ENCODE measurements at regions of chr6 and their contacts with region 1.

Region 1: GRCh38 chr6:30828027-30828960 is 56.0 kb upstream of the DDR1 start:
- DNase-seq: peak; percentile 62 to 88 (median 78)
- ATAC-seq: peak; percentile 81
- H3K4me3 ChIP-seq: peak overlapping the region; percentile 64 to 91
- H3K4me3 Mint-ChIP-seq: peak overlapping the region; percentile 96
- H3K27ac ChIP-seq: peak overlapping the region; percentile 67 to 86
- H3K27ac Mint-ChIP-seq: peak overlapping the region; percentile 97
- H3K4me1 ChIP-seq: peaks cover 46% of the 10 kb centered on the region
- H3K4me1 Mint-ChIP-seq: peaks cover 79% of the 10 kb centered on the region
- H3K27me3 ChIP-seq: no peaks in the 10 kb centered on the region
- H3K27me3 Mint-ChIP-seq: no peaks in the 10 kb centered on the region
- CTCF ChIP-seq: peak; percentile 81

Region 2: DNA sequence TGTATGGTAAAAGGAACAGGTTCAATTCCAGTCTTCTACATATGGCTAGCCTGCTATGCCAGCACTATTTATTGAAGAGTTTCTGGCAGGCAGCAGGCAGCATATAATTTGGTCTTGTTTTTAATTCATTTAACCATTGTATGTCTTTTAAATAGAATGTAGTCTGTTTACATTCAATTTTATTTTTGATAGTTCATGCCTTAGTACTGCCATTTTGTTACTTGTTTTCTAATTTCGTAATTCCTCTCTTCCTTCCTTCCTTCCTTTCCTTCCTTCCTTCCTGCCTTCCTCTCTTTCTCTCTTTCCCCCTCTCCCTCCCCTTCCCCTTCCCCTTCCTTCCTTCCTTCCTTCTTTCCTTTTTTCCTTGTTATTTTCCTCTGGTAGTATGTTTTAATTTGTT is 1675.2 kb before region 1 on chr6:
- CTCF ChIA-PET with region 1: no interaction called
- POLR2A ChIA-PET with region 1: no interaction called
- intact Hi-C with region 1: no loop called
- DNase-seq: no peak
- ATAC-seq: no peak
- H3K4me3 ChIP-seq: no peak overlapping the region
- H3K4me3 Mint-ChIP-seq: no peak overlapping the region
- H3K27ac ChIP-seq: no peak overlapping the region
- H3K27ac Mint-ChIP-seq: no peak overlapping the region
- H3K4me1 ChIP-seq: no peaks in the 10 kb centered on the region
- H3K4me1 Mint-ChIP-seq: no peaks in the 10 kb centered on the region
- H3K27me3 ChIP-seq: peaks cover 0 to 2% of the 10 kb centered on the region in 2 experiments
- H3K27me3 Mint-ChIP-seq: peaks cover 50% of the 10 kb centered on the region
- CTCF ChIP-seq: no peak

Region 3: DNA sequence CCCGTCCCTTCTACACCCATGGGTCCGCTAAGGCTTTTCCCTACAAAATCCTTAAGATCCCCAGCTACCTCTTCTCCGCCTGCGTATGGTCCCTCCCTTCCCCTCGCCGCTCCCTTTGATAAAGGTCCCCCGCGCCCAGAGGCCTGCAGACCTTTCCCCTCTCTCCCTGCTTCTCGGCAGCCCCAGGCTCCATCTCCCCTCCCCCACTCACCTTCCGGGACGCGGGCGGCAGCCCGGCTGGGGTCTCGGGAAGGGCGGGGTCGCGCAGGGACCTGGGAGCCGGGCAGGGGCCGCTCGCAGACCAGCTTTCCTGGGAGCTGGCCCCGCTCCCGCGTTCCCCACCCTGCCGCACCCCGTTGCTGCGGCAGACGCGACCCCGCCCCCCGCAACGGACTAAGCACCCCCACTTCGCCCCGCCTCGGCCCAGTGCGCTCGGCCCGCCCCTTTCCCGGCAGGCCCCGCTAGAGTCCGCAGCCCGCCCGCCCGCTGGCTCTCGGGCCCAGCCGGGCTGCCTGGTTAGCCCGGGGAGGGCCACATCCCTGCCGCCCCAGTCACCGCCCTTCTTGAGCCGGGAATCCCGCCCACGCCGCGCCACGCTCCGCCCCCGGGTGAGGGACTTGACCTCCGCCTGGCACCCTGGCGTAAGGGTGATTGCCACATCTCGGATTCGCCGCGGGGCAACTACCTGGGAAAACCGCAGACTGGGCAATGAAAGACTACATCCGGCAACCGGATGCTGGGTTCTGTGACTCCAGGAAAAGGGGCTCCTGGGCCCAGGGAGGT is 85.8 kb before region 1 on chr6 and contains the start of gene FLOT1:
- CTCF ChIA-PET with region 1: interaction called, 5 read pairs
- POLR2A ChIA-PET with region 1: no interaction called
- intact Hi-C with region 1: loop called in 1 of 2 experiments (anchors 2 kb)
- DNase-seq: peak; percentile 66 to 93 (median 80)
- ATAC-seq: peak; percentile 60
- H3K4me3 ChIP-seq: peak within 1 kb of the TSS; percentile 75 to 84
- H3K4me3 Mint-ChIP-seq: peak within 1 kb of the TSS; percentile 91
- H3K27ac ChIP-seq: peak within 1 kb of the TSS; percentile 49 to 68
- H3K27ac Mint-ChIP-seq: peak within 1 kb of the TSS; percentile 85
- H3K4me1 ChIP-seq: peaks cover 45% of the 10 kb centered on the region
- H3K4me1 Mint-ChIP-seq: peaks cover 60% of the 10 kb centered on the region
- H3K27me3 ChIP-seq: no peaks in the 10 kb centered on the region
- H3K27me3 Mint-ChIP-seq: no peaks in the 10 kb centered on the region
- CTCF ChIP-seq: no peak
- total RNA-seq, gene FLOT1: 27.5 to 27.8 TPM

Region 4: DNA sequence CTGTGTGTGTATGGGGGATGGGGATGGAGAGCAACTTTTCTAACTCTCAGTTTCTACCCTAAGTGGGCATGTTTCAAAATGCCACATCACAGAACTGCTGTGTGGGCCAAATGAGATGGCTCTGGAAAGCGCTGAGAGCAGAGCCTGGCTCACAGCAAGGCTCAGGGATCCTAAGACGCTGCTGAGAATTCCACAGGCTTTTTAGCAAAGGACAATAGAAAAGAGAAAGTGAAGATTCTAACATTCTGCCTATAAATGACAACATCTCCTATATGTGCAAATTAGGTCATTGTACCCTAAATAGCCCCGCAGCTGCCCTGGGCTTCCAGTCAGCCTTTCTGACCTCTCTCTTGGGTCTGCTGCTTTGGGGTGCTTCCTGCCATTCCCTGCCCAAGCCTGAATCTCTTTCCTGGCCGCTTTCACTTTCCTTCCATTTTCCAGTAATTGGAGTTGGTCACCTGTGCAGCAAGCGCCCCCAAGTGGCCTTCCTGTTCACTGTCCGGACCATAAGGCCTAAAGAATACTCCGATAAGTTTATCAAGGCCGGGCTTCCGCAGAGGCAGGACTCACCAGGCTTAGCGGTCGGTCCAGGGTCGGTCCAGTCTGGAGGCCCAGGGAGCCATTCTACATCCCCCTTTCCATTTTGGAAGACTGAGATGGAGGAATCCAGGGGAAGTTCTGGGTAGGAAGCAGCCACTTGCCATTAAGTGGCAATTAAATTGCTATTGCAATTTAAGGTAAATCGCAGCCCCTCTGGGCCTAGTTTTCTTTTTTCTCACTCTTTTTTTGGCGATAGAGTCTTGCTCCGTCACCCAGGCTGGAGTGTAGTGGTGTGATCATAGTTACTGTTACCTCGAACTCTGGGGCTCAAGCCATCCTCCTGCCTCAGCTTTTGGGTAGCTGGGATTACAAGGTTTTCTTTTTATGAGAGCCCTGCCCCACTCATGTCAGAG is 49.4 kb after region 1 on chr6:
- CTCF ChIA-PET with region 1: interaction called, 113 read pairs
- POLR2A ChIA-PET with region 1: no interaction called
- intact Hi-C with region 1: loop called (anchors 1 kb)
- DNase-seq: peak; percentile 48 to 87 (median 74)
- ATAC-seq: peak; percentile 90
- H3K4me3 ChIP-seq: peak overlapping the region; percentile 38 to 46
- H3K4me3 Mint-ChIP-seq: peak overlapping the region; percentile 85
- H3K27ac ChIP-seq: peak overlapping the region in 1 of 2 experiments; percentile 49
- H3K27ac Mint-ChIP-seq: peak overlapping the region; percentile 87
- H3K4me1 ChIP-seq: peaks cover 15% of the 10 kb centered on the region
- H3K4me1 Mint-ChIP-seq: peaks cover 19% of the 10 kb centered on the region
- H3K27me3 ChIP-seq: no peaks in the 10 kb centered on the region
- H3K27me3 Mint-ChIP-seq: no peaks in the 10 kb centered on the region
- CTCF ChIP-seq: peak; percentile 70

Region 5: GRCh38 chr6:30914076-30914853 is 86.0 kb after region 1 on chr6 and contains the start of gene VARS2:
- CTCF ChIA-PET with region 1: interaction called, 13 read pairs
- POLR2A ChIA-PET with region 1: no interaction called
- intact Hi-C with region 1: loop called (anchors 1 kb)
- DNase-seq: peak; percentile 66 to 92 (median 82)
- ATAC-seq: peak; percentile 96
- H3K4me3 ChIP-seq: peak within 1 kb of the TSS; percentile 61 to 92
- H3K4me3 Mint-ChIP-seq: peak within 1 kb of the TSS; percentile 93
- H3K27ac ChIP-seq: peak within 1 kb of the TSS; percentile 48 to 65
- H3K27ac Mint-ChIP-seq: peak within 1 kb of the TSS; percentile 88
- H3K4me1 ChIP-seq: peaks cover 15% of the 10 kb centered on the region
- H3K4me1 Mint-ChIP-seq: peaks cover 29% of the 10 kb centered on the region
- H3K27me3 ChIP-seq: no peaks in the 10 kb centered on the region
- H3K27me3 Mint-ChIP-seq: no peaks in the 10 kb centered on the region
- CTCF ChIP-seq: no peak
- total RNA-seq, gene VARS2: 19.5 to 20.6 TPM

Region 6: GRCh38 chr6:31079656-31080261 is 251.5 kb after region 1 on chr6:
- CTCF ChIA-PET with region 1: interaction called, 49 read pairs
- POLR2A ChIA-PET with region 1: interaction called, 3 read pairs
- intact Hi-C with region 1: no loop called
- DNase-seq: peak; percentile 50 to 81 (median 70)
- ATAC-seq: peak; percentile 88
- H3K4me3 ChIP-seq: peak overlapping the region; percentile 26 to 48
- H3K4me3 Mint-ChIP-seq: peak overlapping the region; percentile 74
- H3K27ac ChIP-seq: no peak overlapping the region
- H3K27ac Mint-ChIP-seq: no peak overlapping the region
- H3K4me1 ChIP-seq: peaks cover 10% of the 10 kb centered on the region
- H3K4me1 Mint-ChIP-seq: peaks cover 9% of the 10 kb centered on the region
- H3K27me3 ChIP-seq: no peaks in the 10 kb centered on the region
- H3K27me3 Mint-ChIP-seq: peaks cover 2% of the 10 kb centered on the region
- CTCF ChIP-seq: peak; percentile 83